ENCODE measurements at regions of chr4 and their contacts with region 1.

Region 1: DNA sequence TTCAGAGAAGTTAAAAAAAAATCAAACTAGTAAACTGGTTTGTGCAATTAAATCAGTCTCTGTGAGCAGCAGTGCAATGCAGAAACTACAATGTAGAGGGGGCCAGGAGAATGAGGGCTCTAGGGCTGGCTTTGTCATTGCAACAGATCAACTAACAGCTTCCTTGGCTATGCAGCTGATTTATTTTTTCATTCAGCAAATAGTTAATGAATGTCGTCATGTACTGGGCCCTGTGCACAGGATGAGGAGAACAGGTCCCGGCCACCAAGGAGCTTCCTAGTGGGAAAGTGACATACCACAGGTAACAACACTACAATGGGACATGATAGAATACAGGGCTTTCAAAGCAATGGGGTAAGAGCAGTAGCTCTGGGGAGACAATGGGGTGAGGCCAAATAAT is 190.1 kb downstream of the NSUN7 start:
- DNase-seq: no peak
- ATAC-seq: peak in 6 of 8 donors; percentile 4 to 43 (median 13)
- H3K4me3 ChIP-seq: no peak overlapping the region
- H3K27ac ChIP-seq: peak overlapping the region in 4 of 10 donors; percentile 13 to 72 (median 42)
- H3K4me1 ChIP-seq: peaks cover 2 to 68% (median 18%) of the 10 kb centered on the region in 9 donors
- H3K27me3 ChIP-seq: no peaks in the 10 kb centered on the region
- CTCF ChIP-seq: no peak

Region 2: GRCh38 chr4:40971338-40971737 is 31.5 kb after region 1 on chr4:
- intact Hi-C with region 1: loop called in 3 of 10 experiments (anchors 5 kb)
- DNase-seq: no peak
- ATAC-seq: no peak
- H3K4me3 ChIP-seq: no peak overlapping the region
- H3K27ac ChIP-seq: no peak overlapping the region
- H3K4me1 ChIP-seq: peaks cover 0 to 15% (median under 1%) of the 10 kb centered on the region in 9 donors
- H3K27me3 ChIP-seq: no peaks in the 10 kb centered on the region
- CTCF ChIP-seq: no peak

Region 3: DNA sequence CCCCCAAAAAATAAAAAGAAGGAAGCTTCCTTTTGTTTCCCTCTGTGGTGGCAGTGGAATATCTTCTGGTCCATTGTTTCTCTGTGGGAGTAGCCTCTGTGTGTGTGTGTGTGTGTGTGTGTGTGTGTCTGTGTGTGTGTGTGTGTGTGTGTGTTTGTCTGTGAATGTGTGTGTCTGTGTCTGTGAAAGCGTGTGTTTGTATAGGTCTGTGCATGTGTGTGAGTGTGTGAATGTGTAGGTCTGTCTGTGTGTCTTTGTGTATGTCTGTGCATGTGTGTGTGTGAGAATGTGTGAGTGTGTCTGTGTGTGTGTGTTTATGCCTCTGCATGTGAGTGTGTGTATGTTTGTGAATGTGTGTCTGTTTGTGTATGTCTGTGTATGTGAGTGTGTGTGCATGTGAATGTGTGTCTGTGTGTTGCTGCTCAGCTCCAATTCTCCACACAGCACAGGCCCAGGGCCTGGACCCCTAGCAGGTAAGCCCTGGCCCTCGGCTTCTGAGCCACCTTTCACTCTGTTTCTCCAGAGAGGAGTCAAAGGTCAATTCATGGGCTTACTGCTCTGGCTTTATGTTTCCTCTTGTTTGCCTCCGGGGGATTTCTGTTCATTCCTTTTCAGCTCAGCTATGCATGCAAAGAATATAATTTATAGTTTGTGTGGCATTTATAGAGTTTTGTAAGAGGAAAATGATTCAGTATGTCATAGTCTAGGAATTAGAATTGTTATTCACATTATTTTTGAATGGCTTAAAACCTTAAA is 406.6 kb after region 1 on chr4:
- intact Hi-C with region 1: no loop called
- DNase-seq: no peak
- ATAC-seq: no peak
- H3K4me3 ChIP-seq: no peak overlapping the region
- H3K27ac ChIP-seq: no peak overlapping the region
- H3K4me1 ChIP-seq: no peaks in the 10 kb centered on the region
- H3K27me3 ChIP-seq: no peaks in the 10 kb centered on the region
- CTCF ChIP-seq: no peak